ENCODE measurements at regions of chr16 and their contacts with region 1.

Region 1: GRCh38 chr16:19389246-19389645 is 28.4 kb upstream of the TMC5 start:
- DNase-seq: peak; percentile 61 to 74 (median 66)
- ATAC-seq: peak; percentile 95
- H3K4me3 ChIP-seq: no peak overlapping the region
- H3K27ac ChIP-seq: no peak overlapping the region
- H3K4me1 ChIP-seq: peaks cover 0 to 6% of the 10 kb centered on the region in 2 experiments; a peak in 3 of 5 replicates
- H3K27me3 ChIP-seq: no peaks in the 10 kb centered on the region; a peak in 1 of 5 replicates
- CTCF ChIP-seq: peak; percentile 73 to 82 (median 79)
- EP300 ChIP-seq: no peak
- POLR2A ChIP-seq: no peak
- RAD21 ChIP-seq: peak in 1 of 2 experiments; percentile 81; a peak in 3 of 4 replicates

Region 2: DNA sequence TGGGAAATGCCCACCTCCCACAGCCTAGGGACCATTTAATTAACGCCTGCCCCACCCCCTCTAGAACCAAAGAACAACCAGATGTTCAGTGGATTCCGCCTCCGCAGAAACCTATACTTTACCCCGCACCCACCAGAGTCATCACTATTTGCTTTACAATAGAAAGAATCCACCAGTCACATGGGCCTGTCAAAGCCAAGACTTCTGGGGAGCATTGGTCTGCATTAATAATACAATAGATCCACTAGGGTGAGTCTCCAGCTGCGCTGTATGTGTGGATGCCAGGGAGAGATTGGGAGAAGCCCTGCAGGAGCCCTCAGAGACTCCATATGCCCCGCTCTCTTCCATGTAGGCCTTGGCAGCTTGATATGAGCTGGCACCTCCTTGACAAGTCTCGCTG is 72.4 kb before region 1 on chr16:
- CTCF ChIA-PET with region 1: no interaction called
- POLR2A ChIA-PET with region 1: no interaction called
- in situ Hi-C with region 1: no loop called
- intact Hi-C with region 1: no loop called
- DNase-seq: no peak
- ATAC-seq: no peak
- H3K4me3 ChIP-seq: no peak overlapping the region
- H3K27ac ChIP-seq: no peak overlapping the region
- H3K4me1 ChIP-seq: no peaks in the 10 kb centered on the region
- H3K27me3 ChIP-seq: peaks cover 0 to 6% of the 10 kb centered on the region in 2 experiments; a peak in 2 of 5 replicates
- CTCF ChIP-seq: no peak
- EP300 ChIP-seq: no peak
- POLR2A ChIP-seq: no peak
- RAD21 ChIP-seq: no peak

Region 3: GRCh38 chr16:19375561-19376158 is 13.6 kb before region 1 on chr16:
- CTCF ChIA-PET with region 1: no interaction called
- POLR2A ChIA-PET with region 1: no interaction called
- in situ Hi-C with region 1: no loop called
- intact Hi-C with region 1: no loop called
- DNase-seq: peak; percentile 65 to 70 (median 70)
- ATAC-seq: peak; percentile 78
- H3K4me3 ChIP-seq: no peak overlapping the region
- H3K27ac ChIP-seq: no peak overlapping the region
- H3K4me1 ChIP-seq: no peaks in the 10 kb centered on the region
- H3K27me3 ChIP-seq: no peaks in the 10 kb centered on the region
- CTCF ChIP-seq: peak; percentile 73 to 88 (median 73)
- EP300 ChIP-seq: no peak
- POLR2A ChIP-seq: no peak
- RAD21 ChIP-seq: peak; percentile 85 to 94

Region 4: DNA sequence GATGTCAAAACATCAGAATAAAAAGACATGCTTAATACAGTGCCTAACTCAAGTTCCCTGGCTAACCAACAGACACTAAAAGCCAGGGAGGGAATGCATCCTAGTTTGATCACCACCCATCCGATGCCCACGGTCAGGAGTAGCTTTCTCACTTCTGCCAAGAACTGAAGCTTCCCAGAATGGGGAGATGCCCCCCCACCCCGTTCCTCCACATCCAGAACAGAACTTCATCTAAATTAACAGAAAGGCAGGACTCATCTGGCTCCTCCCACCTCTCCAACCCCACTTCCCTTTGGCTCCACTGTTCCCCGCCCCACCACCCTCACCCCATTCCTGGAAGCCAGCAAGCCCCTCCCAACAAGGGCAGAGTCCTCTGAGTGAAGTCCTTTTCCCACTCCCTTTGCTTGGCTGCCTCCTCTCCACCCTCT is 99.0 kb after region 1 on chr16:
- CTCF ChIA-PET with region 1: no interaction called
- POLR2A ChIA-PET with region 1: no interaction called
- in situ Hi-C with region 1: no loop called
- intact Hi-C with region 1: loop called (anchors 10 kb)
- DNase-seq: peak; percentile 78 to 91 (median 80)
- ATAC-seq: peak; percentile 74
- H3K4me3 ChIP-seq: peak overlapping the region; percentile 24; the same call in 1 of the 2 replicates
- H3K27ac ChIP-seq: peak overlapping the region; percentile 94
- H3K4me1 ChIP-seq: peaks cover 34 to 41% of the 10 kb centered on the region in 2 experiments
- H3K27me3 ChIP-seq: no peaks in the 10 kb centered on the region
- CTCF ChIP-seq: no peak
- EP300 ChIP-seq: 0 out of 2 replicates have a peak, but pooled peaks have one; percentile 25
- POLR2A ChIP-seq: peak; percentile 60
- RAD21 ChIP-seq: no peak

Region 5: DNA sequence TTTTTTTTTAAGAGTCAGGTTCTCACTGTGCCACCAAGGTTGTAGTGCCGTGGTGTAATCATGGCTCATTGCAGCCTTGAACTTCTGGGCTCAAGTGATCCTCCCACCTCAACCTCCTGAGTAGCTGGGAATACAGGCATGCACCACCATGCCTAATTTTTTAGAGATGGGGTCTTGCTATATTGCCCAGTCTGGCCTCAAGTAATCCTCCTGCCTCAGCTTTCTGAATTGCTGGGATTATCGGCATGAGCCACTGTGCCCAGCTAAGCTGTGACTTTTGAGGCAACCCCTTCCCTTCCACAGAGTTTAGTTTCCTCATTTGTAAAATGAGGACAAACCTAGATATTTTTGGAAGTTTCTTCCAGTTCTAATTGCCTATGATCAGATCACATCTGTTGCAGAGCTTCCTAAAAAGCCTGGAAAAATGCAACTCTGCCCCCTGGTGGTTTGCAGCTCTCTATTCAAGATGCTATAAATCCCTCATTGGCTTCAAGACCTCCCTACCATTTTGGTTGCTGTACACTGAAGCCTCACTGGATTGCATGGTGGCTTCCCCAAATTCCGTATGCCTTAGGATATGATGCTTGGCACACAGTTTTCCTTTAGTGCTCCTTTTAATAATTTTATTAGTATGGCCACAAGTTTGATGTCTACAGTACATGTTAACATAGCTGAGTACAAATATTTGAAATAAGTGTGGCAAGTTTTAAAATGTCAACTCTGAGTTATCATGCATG is 113.3 kb after region 1 on chr16:
- CTCF ChIA-PET with region 1: interaction called, 11 read pairs
- POLR2A ChIA-PET with region 1: interaction called, 4 read pairs
- in situ Hi-C with region 1: loop called (anchors 5 kb)
- intact Hi-C with region 1: no loop called
- DNase-seq: peak; percentile 67 to 86 (median 71)
- ATAC-seq: peak; percentile 89
- H3K4me3 ChIP-seq: no peak overlapping the region
- H3K27ac ChIP-seq: no peak overlapping the region
- H3K4me1 ChIP-seq: no peaks in the 10 kb centered on the region
- H3K27me3 ChIP-seq: no peaks in the 10 kb centered on the region
- CTCF ChIP-seq: peak; percentile 78 to 87 (median 83)
- EP300 ChIP-seq: 0 out of 2 replicates have a peak, but pooled peaks have one; percentile 17
- POLR2A ChIP-seq: no peak
- RAD21 ChIP-seq: peak; percentile 76 to 90

Region 6: GRCh38 chr16:19521471-19522396 is 132.5 kb after region 1 on chr16 and contains the start of gene GDE1:
- CTCF ChIA-PET with region 1: no interaction called
- POLR2A ChIA-PET with region 1: no interaction called
- in situ Hi-C with region 1: no loop called
- intact Hi-C with region 1: loop called (anchors 10 kb)
- DNase-seq: peak; percentile 94 to 98 (median 97)
- ATAC-seq: peak; percentile 87
- H3K4me3 ChIP-seq: peak within 1 kb of the TSS; percentile 73
- H3K27ac ChIP-seq: peak within 1 kb of the TSS; percentile 84
- H3K4me1 ChIP-seq: peaks cover 27 to 50% of the 10 kb centered on the region in 2 experiments; a peak in 4 of 5 replicates
- H3K27me3 ChIP-seq: no peaks in the 10 kb centered on the region
- CTCF ChIP-seq: peak; percentile 56 to 59 (median 58); a peak in 5 of 6 replicates
- EP300 ChIP-seq: no peak
- POLR2A ChIP-seq: peak; percentile 78
- RAD21 ChIP-seq: no peak; a peak in 1 of 4 replicates
- polyA plus RNA-seq, gene GDE1: 18.8 to 21.7 TPM